ENCODE measurements at regions of chr1 and their contacts with region 1.

Region 1: DNA sequence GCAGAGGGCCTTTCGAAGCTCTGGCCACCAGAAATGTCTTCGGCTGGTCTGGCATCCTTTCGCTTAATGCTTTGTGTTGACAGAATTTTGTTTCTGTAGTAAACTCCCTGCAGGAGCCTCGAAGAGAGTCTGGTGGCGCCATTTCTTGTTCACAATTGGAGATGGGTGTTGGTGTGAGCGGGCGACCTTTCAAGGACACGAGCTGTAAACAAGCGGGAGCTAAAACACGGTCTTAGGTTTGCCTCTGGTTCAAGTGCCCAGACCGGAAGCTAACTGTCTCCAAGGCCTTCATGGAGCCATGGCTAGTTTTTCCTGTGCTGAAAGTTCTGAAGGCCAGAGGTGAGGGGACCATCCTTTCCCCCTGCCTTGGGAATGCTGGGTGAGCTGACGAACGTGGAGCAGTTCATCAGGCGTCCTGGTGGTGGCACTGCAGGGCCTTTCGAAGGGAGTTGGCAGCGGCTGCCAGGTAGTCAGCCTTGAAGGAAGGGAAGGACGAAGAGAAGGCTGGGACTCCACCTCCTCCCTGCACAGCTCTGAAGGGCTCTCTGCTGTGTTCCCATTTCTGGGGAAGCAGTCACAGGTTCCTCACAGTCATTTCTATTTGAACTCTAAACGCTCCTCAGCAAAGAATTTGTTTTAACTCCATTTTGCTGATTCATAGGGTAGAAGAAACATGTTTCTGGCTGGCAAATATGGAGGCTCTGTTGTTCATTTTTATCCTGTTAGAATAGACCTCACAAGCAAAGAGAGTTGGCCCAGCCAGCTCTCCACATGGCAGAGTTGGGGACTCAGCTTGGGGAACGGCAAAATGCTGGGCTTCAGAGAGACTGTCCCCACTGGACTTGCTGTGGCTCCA is 35.2 kb downstream of the URB2 start:
- DNase-seq: peak; percentile 90
- H3K4me3 Mint-ChIP-seq: no peak overlapping the region
- H3K27ac Mint-ChIP-seq: no peak overlapping the region
- H3K4me1 Mint-ChIP-seq: peaks cover 12% of the 10 kb centered on the region
- H3K27me3 Mint-ChIP-seq: no peaks in the 10 kb centered on the region

Region 2: DNA sequence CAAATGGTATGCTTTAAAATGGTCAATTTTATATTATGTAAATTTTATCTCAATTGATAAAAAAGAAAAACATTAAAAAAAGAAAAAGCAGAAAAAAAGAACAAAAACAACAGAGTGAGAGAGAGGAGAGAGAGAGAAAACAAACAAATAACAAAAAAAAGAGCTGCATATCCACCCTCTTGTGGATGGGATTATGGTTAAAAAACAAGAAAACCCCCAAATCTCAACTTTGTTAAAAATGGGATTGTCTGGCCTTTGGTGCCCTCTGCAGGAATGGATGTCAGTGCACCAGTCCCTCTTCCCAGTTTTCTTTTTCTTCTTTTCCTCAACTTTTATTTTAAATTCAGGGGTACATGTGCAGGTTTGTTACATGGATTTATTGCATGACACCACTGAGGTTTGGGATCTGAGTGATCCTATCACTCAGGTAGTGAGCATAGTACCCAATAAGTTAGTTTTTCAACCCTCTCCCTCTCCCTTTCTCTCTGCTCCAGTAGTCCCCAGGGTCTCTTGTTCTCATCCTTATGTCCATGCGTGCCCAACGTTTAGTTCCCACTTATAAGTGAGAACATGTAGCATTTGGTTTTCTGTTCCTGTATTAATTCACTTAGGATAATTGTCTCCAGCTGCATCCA is 1145.9 kb before region 1 on chr1:
- CTCF ChIA-PET with region 1: no interaction called
- intact Hi-C with region 1: no loop called
- DNase-seq: peak; percentile 60
- H3K4me3 Mint-ChIP-seq: no peak overlapping the region
- H3K27ac Mint-ChIP-seq: no peak overlapping the region
- H3K4me1 Mint-ChIP-seq: peaks cover 4% of the 10 kb centered on the region
- H3K27me3 Mint-ChIP-seq: peaks cover 2% of the 10 kb centered on the region

Region 3: DNA sequence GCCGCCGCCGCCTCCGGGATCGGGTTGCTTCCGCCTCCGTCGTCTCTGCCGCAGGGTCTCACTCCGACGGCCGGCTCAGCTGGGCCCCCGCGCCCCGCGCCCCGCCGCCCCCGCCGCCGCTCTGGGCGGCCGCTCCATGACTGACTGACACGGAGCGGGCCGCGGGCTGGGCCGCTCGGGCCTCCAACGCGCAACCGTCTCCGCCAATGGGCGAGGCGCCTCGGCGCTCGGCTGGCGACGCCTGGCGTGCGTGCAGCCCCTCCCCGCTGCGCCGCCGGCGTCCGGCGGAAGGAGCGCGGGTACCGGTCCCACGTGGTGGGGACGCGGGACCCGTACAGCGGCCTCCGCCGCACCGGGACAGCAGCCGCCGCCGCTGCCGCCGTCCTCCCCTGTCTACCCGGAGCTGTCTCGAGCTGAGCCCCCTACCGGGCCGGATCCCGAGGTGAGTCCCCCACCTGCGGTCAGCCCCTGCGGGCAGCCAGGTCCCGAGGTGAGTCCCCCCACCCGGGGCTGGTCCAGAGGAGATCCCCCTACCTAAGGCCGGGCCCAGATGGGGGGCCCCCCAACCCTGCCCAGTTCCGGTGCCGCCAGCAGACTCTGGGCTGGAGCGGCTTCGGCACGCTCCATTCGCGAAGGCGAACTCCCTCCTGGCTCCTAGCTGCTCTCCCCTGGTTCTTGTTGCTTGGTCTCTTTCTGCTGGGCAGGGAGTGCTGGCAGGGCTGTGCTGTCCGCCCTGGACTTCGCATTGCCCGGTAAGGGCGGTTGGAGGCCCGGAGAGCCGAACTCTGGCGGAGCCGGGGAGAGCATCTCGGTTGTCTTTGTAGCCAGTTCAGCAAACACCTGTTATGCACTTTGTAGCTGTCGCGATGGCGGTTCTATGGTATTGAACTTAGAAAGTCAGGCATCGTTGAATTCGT is 35.1 kb before region 1 on chr1 and contains the starts of genes TAF5L and URB2:
- CTCF ChIA-PET with region 1: interaction called, 3 read pairs
- intact Hi-C with region 1: loop called (anchors 1 kb)
- DNase-seq: peak; percentile 85
- H3K4me3 Mint-ChIP-seq: peak within 1 kb of the TSS; percentile 99
- H3K27ac Mint-ChIP-seq: peak within 1 kb of the TSS; percentile 89
- H3K4me1 Mint-ChIP-seq: peaks cover 51% of the 10 kb centered on the region
- H3K27me3 Mint-ChIP-seq: no peaks in the 10 kb centered on the region
- total RNA-seq, gene TAF5L: 10.3 TPM
- total RNA-seq, gene URB2: 9.5 to 10.0 TPM

Region 4: DNA sequence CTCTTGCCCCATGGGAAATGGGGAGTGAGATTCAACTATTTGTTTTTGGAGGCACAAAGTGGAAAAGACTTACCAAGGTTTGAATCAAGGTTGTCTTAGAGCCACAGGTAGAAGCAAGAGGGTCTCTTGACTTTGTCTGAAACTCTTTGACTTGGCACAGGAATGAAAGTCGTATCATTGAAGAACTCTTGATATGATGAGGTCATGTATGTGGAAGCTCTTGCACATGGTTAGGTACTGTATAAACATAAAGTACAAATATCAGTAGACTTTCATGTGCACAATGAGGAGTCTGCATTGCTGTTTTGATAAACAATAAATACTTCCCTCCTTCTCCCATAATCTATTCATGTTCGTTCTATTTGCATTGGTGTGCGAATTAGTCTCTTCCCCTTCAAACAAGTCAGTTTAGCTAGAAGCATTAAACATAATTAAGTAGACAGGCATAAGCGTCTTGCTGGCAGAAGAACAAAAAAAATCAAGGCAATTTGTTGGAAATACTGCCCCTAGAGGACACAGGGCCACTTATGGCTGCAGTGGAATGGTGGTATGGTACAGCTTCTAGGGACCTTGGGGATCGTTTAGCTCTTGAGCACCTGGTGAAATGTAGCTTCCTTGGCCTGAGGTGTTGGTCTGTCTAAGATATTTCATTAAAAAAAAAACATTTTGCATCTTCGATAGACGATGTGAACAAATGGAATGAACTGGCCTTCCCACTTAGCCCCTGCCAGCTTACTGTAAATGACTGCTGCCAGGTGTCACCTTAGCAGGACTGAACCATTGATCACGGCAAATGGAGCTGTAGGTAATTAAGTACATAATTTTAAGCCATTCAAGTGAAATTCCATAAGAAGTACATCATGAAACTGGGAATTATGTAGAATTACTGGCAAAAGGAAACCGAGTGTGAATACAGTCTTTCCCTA is 187.8 kb after region 1 on chr1:
- CTCF ChIA-PET with region 1: interaction called, 3 read pairs
- intact Hi-C with region 1: loop called (anchors 2 kb)
- DNase-seq: peak; percentile 21
- H3K4me3 Mint-ChIP-seq: no peak overlapping the region
- H3K27ac Mint-ChIP-seq: no peak overlapping the region
- H3K4me1 Mint-ChIP-seq: no peaks in the 10 kb centered on the region
- H3K27me3 Mint-ChIP-seq: peaks cover 3% of the 10 kb centered on the region

Region 5: DNA sequence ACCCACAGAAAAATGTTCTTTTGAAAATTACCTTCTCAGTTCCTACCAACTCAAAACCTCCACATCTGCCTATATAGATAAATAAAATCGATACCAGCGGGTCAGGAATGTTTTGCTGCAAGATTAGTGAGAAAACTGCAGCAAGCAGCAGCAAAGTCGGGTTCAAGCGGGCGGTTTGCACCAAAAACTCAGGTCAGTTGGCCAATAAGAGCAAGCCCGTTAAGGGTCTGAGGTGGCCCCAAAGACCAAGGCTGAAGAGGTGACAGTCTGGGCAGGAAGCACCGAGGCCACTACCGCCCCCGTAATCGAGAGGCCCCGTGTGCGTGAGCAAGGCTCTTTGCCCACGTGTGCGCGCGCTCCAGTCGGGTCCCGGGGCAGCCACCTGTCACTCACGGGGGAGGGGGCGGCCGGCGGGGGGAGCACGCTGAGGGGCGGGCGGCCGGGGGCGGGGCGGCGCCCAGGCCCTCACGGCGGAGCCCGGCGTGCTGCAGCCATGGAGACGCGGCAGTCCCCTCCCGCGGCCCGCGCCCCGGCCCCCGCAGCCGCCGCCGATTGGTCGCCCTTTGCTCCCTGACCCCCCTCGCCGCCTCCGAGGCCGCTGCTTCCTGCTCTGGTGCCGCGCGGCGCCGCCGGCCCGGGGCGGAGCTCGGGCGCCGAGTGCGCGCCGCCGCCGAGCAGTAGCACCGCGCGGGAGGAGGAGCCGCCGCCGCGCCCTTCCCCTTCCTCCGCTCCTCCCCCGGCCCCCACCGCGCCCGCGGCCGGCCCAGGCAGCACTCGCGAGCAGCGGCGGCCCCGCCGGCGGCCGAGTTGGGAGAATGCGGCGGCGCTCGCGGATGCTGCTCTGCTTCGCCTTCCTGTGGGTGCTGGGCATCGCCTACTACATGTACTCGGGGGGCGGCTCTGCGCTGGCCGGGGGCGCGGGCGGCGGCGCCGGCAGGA is 405.5 kb after region 1 on chr1 and contains the start of gene GALNT2:
- CTCF ChIA-PET with region 1: no interaction called
- intact Hi-C with region 1: loop called (anchors 5 kb)
- DNase-seq: peak; percentile 89
- H3K4me3 Mint-ChIP-seq: peak within 1 kb of the TSS; percentile 88
- H3K27ac Mint-ChIP-seq: peak within 1 kb of the TSS; percentile 83
- H3K4me1 Mint-ChIP-seq: peaks cover 44% of the 10 kb centered on the region
- H3K27me3 Mint-ChIP-seq: no peaks in the 10 kb centered on the region
- total RNA-seq, gene GALNT2: 59.8 to 62.4 TPM

Region 6: DNA sequence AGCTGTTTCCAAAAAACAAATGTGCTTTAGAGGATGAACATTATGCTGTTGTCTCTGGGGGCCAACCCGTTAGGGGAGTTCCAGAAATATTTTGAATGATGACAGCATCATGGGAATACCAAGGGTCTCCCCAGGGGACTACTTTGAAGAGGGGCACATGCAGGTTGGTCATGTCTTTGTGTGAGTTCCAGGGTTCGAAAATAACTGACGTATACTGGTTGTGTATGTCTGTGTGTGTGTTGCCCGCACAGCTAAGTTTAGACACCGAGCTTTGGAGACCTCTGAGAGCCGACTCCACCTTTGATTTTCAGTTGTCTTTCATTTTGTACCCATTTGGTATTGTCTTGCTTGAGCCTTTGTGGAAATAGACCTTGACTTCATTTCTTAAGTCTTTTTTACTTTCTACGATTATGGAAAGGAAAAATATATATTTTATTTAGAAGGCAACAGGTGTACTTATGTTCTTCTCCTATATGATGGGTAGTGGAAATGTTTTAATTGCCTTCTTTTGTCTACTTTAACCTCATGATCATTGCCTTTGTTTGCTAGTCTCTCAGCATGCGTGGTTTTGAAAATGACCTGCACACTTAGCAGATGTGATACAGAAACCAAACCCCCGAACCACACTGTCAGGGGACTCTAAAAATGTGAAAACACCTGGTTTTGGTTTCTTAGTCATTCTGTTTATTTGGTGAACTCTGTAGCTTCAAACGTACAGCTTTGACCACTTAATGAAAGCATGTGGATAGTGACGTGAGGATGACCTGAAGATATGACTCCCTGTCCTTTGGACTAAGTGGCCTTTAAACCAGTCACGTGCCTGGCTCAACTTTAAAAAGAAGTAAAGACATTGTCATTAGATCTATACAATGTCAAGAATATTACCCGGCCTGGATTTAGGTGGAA is 462.3 kb after region 1 on chr1:
- CTCF ChIA-PET with region 1: interaction called, 3 read pairs
- intact Hi-C with region 1: loop called (anchors 1 kb)
- DNase-seq: peak; percentile 63
- H3K4me3 Mint-ChIP-seq: no peak overlapping the region
- H3K27ac Mint-ChIP-seq: no peak overlapping the region
- H3K4me1 Mint-ChIP-seq: peaks cover 73% of the 10 kb centered on the region
- H3K27me3 Mint-ChIP-seq: no peaks in the 10 kb centered on the region

Region 7: DNA sequence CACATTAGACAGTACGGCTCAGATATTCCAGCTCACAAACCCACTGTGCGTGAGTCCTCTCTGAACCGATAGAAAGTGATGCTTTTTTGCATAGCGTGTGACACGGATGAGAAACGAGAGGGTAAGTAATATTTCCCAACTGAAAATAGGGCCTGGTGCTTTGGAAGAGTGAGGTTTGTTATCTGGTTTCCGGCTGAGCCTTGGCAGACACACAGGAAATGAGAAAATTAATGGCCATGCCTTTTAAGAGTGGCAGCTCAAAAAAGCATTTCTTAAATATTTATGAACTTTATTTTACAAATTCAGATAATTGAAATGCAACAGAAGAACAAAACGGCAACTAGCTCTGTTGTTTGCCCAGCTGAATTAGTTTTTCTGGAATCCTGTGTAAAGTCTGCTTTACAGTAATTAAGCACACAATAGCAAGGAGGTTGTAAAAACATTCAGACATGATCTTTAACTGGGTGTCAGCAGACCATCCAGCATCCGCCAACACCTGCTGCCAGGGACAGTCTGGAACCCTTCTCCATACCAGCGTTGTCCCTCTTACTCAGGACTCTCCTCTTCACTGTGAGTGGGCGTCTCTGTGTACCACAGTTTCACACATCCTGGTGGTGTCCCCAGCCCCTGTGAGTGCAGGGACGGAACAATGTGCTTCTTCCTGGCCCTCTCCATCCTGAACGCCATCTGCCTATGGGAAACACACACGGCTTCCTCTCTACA is 609.5 kb after region 1 on chr1:
- CTCF ChIA-PET with region 1: interaction called, 6 read pairs
- intact Hi-C with region 1: loop called (anchors 1 kb)
- DNase-seq: peak; percentile 59
- H3K4me3 Mint-ChIP-seq: no peak overlapping the region
- H3K27ac Mint-ChIP-seq: peak overlapping the region; percentile 75
- H3K4me1 Mint-ChIP-seq: peaks cover 57% of the 10 kb centered on the region
- H3K27me3 Mint-ChIP-seq: no peaks in the 10 kb centered on the region